Cardiac septum (tissue), 1 donor: ENCODE measurements at regions of chr6 and their contacts with region 1.

Region 1: DNA sequence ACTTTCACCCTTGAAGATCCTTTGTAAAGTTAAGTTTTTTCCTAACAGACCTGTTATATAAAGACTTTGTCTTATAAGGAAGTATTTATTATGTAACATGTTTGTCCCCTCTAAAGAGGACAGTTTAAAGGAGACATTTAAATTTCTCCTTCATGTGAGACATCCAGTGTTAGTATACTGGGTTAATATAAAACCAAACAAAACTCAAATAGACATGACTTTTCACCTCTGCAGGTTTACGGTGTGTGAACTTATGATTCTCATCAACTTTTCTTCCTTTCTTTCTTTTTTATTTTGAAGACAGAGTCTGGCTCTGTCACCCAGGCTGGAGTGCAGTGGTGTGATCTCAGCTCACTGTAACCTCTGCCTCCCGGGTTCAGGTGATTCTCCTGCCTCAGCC is 17.4 kb upstream of the MPC1 start:
- DNase-seq: no peak

Region 2: GRCh38 chr6:166275714-166276166 is 124.4 kb before region 1 on chr6:
- intact Hi-C with region 1: loop called (anchors 2 kb)
- DNase-seq: peak; percentile 91

Region 3: GRCh38 chr6:166313255-166314070 is 86.7 kb before region 1 on chr6:
- intact Hi-C with region 1: loop called (anchors 2 kb)
- DNase-seq: no peak

Region 4: GRCh38 chr6:166572370-166573261 is 172.4 kb after region 1 on chr6:
- intact Hi-C with region 1: no loop called
- DNase-seq: no peak

Region 5: DNA sequence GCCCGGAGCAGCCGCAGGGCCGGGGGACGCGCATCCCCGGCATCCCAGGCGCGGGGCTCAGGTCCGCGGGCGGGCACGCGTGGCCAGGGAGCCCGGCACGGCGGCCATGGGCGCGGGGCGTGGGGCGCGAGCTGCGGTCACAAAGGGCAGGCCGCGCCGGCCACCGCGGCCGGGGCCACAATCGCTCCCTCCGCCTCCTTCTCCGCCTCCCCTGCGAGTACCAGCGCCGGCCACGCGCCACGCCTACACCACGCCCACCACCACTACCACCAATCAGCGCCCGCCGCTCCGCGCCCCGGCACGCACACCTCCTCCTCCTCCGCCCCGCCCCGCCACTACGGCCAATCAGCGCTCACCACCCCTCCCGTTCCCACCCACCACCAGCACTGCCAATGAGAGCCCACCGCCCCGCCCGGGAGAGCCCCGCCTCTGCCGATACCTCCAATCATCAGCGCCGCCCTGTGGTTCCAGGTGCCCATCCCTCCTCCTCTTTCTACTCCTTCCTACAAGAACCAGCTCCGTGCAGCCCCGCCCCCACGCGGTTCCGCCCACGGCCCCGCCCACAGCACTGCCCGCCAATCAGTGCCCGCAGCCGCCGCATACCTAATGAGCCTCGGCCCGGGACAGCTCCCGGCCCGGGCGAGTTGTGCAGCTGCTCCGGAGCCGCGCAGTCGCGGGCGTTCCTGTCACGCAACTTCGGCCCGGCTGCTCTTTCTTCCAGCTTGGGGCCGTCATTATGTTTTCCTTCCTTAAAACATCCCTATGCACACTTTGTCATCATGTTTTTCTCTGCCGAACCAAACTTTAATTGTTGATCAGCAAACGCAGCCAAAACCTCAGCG is 227.1 kb after region 1 on chr6 and contains the start of gene RPS6KA2:
- intact Hi-C with region 1: no loop called
- DNase-seq: peak; percentile 100
- total RNA-seq, gene RPS6KA2: 103 TPM

Region 6: DNA sequence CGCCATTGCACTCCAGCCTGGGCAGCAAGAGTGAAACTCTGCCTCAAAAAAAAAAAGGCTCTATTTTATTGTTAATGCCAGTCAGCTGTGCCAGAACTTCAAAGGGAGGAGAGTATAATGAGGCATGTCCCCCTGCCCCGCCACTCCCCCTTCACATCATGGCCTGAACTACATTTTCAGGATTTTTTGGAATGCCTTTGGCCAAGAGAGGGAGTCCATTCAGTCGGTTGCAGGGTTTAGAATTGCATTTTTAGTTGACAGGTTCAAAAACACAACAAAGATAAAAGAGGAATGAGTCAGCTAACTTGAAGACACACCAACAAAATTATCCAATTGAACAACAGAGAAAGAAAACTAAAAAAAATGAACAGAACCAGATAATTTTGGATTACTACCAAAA is 658.1 kb after region 1 on chr6:
- intact Hi-C with region 1: no loop called
- DNase-seq: no peak